ENCODE measurements at regions of chr3 and their contacts with region 1.

Region 1: GRCh38 chr3:51371943-51372557 is 13.0 kb upstream of the MANF start:
- DNase-seq: peak; percentile 72
- ATAC-seq: peak; percentile 74
- H3K4me3 Mint-ChIP-seq: no peak overlapping the region
- H3K27ac Mint-ChIP-seq: no peak overlapping the region
- H3K4me1 Mint-ChIP-seq: no peaks in the 10 kb centered on the region
- H3K27me3 Mint-ChIP-seq: peaks cover 3% of the 10 kb centered on the region

Region 2: GRCh38 chr3:51099794-51100535 is 272.1 kb before region 1 on chr3:
- CTCF ChIA-PET with region 1: interaction called, 6 read pairs
- POLR2A ChIA-PET with region 1: no interaction called
- intact Hi-C with region 1: loop called (anchors 5 kb)
- DNase-seq: peak; percentile 43
- ATAC-seq: no peak
- H3K4me3 Mint-ChIP-seq: no peak overlapping the region
- H3K27ac Mint-ChIP-seq: no peak overlapping the region
- H3K4me1 Mint-ChIP-seq: peaks cover 5% of the 10 kb centered on the region
- H3K27me3 Mint-ChIP-seq: peaks cover 4% of the 10 kb centered on the region

Region 3: DNA sequence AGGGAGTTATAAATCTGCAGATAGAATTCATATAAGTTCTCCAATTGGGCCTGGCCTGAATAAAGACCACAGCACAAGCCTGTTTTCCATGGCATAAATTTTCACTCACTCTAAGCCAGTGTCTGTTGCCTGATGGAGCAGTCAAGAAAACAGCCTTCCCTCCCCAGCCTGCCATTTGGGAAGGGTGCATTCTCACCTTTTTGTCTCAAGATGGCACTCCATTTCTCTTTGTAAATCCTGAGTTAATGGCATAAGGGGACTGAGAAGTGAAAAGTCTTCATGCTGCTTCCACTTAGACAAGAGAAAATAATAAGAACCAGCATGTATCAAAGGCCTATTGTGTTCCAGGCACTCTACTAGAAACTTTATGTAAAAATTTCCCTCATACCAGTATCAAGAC is 102.6 kb before region 1 on chr3:
- CTCF ChIA-PET with region 1: no interaction called
- POLR2A ChIA-PET with region 1: no interaction called
- intact Hi-C with region 1: no loop called
- DNase-seq: no peak
- ATAC-seq: no peak
- H3K4me3 Mint-ChIP-seq: no peak overlapping the region
- H3K27ac Mint-ChIP-seq: no peak overlapping the region
- H3K4me1 Mint-ChIP-seq: peaks cover 29% of the 10 kb centered on the region
- H3K27me3 Mint-ChIP-seq: no peaks in the 10 kb centered on the region